IMR-90 (cell line): ENCODE measurements at regions of chr4 and their contacts with region 1.

Region 1: GRCh38 chr4:70839589-70840093 is at the start of gene GRSF1:
- DNase-seq: peak; percentile 91
- ATAC-seq: peak; percentile 98
- H3K4me3 ChIP-seq: peak within 1 kb of the TSS; percentile 70
- H3K27ac ChIP-seq: peak within 1 kb of the TSS; percentile 63
- H3K4me1 ChIP-seq: peaks cover 5% of the 10 kb centered on the region
- H3K27me3 ChIP-seq: no peaks in the 10 kb centered on the region
- CTCF ChIP-seq: no peak
- POLR2A ChIP-seq: peak; percentile 48; the same call in 1 of the 2 replicates
- RAD21 ChIP-seq: peak; percentile 31; the same call in 1 of the 2 replicates
- total RNA-seq, gene GRSF1: 67.7 and 107 TPM in 2 replicates

Region 2: DNA sequence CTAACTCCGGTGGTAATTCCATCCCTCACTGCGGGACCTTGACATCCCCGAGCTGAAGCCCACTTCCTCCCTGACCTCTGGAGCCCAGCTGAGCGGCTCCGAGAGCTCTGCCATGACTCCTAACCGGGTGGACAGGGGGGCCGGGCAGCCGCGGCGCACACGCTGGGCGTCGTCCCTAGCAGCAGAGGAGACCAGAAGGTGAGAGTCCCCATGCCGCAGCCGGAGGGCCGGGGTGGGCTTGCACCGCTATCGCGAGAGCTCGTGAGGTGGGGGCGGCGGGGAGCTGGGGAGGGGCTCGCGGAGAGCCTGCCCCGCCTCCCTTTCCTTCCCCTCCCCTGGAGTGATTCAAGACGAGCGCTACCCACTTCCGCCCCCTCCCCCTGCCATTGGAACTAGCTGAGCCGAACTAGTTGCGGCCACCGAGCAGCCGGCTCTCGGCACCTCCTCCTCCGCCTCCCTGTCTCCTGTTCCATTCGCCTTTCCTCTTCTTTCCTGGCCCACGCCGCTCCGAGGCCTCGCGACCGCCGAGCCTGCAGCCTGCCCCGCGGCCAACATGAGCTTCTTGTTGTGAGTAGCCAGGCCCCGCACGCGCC is 62.4 kb after region 1 on chr4 and contains the start of gene MOB1B:
- CTCF ChIA-PET with region 1: no interaction called
- POLR2A ChIA-PET with region 1: no interaction called
- dilution Hi-C with region 1: no loop called
- in situ Hi-C with region 1: no loop called
- intact Hi-C with region 1: loop called (anchors 1 kb)
- DNase-seq: peak; percentile 88
- ATAC-seq: peak; percentile 96
- H3K4me3 ChIP-seq: peak within 1 kb of the TSS; percentile 83
- H3K27ac ChIP-seq: peak within 1 kb of the TSS; percentile 88
- H3K4me1 ChIP-seq: 0 out of 2 replicates have a peak, but pooled peaks cover 1% of the 10 kb centered on the region
- H3K27me3 ChIP-seq: no peaks in the 10 kb centered on the region
- CTCF ChIP-seq: peak; percentile 45
- POLR2A ChIP-seq: peak; percentile 78
- RAD21 ChIP-seq: peak; percentile 43; the same call in 1 of the 2 replicates
- total RNA-seq, gene MOB1B: 5.7 and 15.0 TPM in 2 replicates

Region 3: GRCh38 chr4:70915036-70915815 is 75.6 kb after region 1 on chr4:
- CTCF ChIA-PET with region 1: no interaction called
- POLR2A ChIA-PET with region 1: no interaction called
- dilution Hi-C with region 1: no loop called
- in situ Hi-C with region 1: no loop called
- intact Hi-C with region 1: loop called (anchors 2 kb)
- DNase-seq: peak; percentile 78
- ATAC-seq: peak; percentile 53
- H3K4me3 ChIP-seq: peak overlapping the region; percentile 33; the same call in 1 of the 2 replicates
- H3K27ac ChIP-seq: peak overlapping the region; percentile 88
- H3K4me1 ChIP-seq: peaks cover 6% of the 10 kb centered on the region
- H3K27me3 ChIP-seq: no peaks in the 10 kb centered on the region
- CTCF ChIP-seq: no peak
- POLR2A ChIP-seq: no peak
- RAD21 ChIP-seq: no peak

Region 4: DNA sequence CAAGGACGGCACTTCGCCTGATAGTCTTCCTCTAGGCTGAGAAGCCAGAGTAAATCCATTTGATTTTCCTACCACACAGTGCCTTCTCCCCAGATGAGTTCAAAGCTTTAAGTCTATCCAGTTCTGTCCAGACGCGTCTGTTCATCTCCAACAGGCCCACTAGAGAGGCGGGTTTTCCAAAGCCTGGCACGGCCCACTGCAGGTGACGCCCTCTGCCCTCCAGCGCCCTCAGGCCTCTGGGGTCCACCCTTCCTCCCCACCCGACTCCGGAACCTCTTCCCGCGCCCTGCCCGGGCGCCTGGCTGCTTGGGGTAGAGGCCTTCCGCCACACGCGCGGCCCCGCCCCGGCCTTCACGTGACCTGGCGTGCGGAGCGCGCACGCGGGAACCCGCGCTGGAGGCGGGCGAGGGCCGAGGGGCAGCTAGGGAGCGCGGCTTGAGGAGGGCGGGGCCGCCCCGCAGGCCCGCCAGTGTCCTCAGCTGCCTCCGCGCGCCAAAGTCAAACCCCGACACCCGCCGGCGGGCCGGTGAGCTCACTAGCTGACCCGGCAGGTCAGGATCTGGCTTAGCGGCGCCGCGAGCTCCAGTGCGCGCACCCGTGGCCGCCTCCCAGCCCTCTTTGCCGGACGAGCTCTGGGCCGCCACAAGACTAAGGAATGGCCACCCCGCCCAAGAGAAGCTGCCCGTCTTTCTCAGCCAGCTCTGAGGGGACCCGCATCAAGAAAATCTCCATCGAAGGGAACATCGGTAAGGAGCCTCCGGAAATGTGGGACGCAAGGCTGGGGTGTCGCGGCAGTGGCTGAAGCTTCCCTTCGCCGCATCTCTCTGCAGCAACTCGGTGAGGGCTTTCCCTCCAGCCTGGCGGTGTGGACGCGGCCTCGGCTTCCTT is 153.8 kb after region 1 on chr4 and contains the start of gene DCK:
- CTCF ChIA-PET with region 1: no interaction called
- POLR2A ChIA-PET with region 1: no interaction called
- dilution Hi-C with region 1: no loop called
- in situ Hi-C with region 1: loop called (anchors 10 kb)
- intact Hi-C with region 1: loop called (anchors 5 kb)
- DNase-seq: peak; percentile 90
- ATAC-seq: peak; percentile 95
- H3K4me3 ChIP-seq: peak within 1 kb of the TSS; percentile 87
- H3K27ac ChIP-seq: peak within 1 kb of the TSS; percentile 94
- H3K4me1 ChIP-seq: peaks cover 5% of the 10 kb centered on the region
- H3K27me3 ChIP-seq: no peaks in the 10 kb centered on the region
- CTCF ChIP-seq: no peak
- POLR2A ChIP-seq: peak; percentile 75
- RAD21 ChIP-seq: peak; percentile 25
- total RNA-seq, gene DCK: 7.0 and 14.4 TPM in 2 replicates

Region 5: DNA sequence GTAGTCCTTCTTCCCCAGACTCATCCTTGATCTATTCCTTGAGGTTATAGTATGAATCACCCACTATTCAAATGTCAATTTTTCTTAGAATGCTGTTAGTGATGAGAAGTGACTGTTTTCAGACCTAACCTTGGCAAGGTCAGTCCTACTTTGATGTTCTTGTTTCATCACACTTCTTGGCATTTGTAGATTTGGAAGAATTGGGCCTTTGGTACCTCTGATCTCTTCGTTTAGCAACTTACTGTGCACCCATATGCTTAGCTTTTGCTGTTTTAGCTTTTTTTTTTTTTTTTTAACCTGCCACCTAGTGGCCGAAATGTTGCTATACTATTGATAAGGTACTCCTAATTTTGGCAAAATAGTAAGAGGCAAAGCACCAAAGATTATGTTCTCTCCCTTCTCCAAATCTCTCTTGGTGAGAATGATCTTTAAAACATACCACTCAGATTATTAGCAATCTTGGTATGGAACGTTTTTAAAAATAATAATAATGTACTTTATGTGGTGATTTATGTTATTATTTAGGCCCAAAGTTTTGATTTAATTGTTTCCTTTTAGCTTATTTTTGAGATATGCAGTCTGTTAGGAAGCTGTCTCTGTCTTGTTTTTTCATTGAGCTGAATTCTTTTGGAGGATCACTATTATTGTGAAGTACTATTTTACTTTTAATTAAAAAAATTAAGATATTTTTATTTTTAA is 170.4 kb after region 1 on chr4:
- CTCF ChIA-PET with region 1: interaction called, 3 read pairs
- POLR2A ChIA-PET with region 1: no interaction called
- dilution Hi-C with region 1: no loop called
- in situ Hi-C with region 1: no loop called
- intact Hi-C with region 1: loop called (anchors 1 kb)
- DNase-seq: peak; percentile 56
- ATAC-seq: peak; percentile 59
- H3K4me3 ChIP-seq: no peak overlapping the region
- H3K27ac ChIP-seq: no peak overlapping the region
- H3K4me1 ChIP-seq: peaks cover 8% of the 10 kb centered on the region
- H3K27me3 ChIP-seq: no peaks in the 10 kb centered on the region
- CTCF ChIP-seq: peak; percentile 58
- POLR2A ChIP-seq: no peak
- RAD21 ChIP-seq: peak; percentile 30